Posterior cingulate gyrus (tissue), 11 donors: ENCODE measurements at regions of chr17 and their contacts with region 1.

Region 1: GRCh38 chr17:29640413-29640812 is 17.7 kb upstream of the CORO6 start:
- DNase-seq: peak in 1 of 10 donors; percentile 4

Region 2: DNA sequence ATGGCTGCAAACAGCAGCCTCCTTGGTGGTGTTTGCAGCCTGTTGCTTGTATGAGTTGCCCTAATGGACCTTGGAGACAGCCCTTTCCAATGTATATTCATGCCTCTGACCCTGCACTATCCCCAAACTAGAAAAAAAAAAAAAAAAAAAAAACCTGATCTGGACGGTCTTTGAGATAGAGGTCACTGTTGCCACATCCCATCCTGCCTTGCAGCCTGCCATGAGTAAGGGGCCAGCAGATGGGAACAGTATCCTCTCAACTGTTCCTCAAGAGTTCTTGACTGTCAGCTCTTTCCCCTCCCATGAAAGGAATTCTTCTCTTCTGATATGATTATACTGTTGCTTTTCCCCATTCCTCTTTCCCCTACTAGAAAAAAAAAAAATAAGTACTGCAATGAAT is 137.2 kb after region 1 on chr17:
- intact Hi-C with region 1: loop called (anchors 1 kb)
- DNase-seq: no peak